ENCODE measurements at regions of chr1 and their contacts with region 1.

Region 1: GRCh38 chr1:214551436-214552173 is at the start of gene PTPN14:
- DNase-seq: peak; percentile 97
- H3K4me3 Mint-ChIP-seq: peak within 1 kb of the TSS; percentile 89
- H3K27ac Mint-ChIP-seq: peak within 1 kb of the TSS; percentile 90
- H3K4me1 Mint-ChIP-seq: peaks cover 39% of the 10 kb centered on the region
- H3K27me3 Mint-ChIP-seq: no peaks in the 10 kb centered on the region
- CTCF ChIP-seq: peak; percentile 77
- total RNA-seq, gene PTPN14: 240 and 243 TPM in 2 replicates

Region 2: GRCh38 chr1:214404154-214404553 is 147.5 kb before region 1 on chr1:
- CTCF ChIA-PET with region 1: interaction called, 17 read pairs
- POLR2A ChIA-PET with region 1: interaction called, 20 read pairs
- intact Hi-C with region 1: no loop called
- DNase-seq: peak; percentile 40
- H3K4me3 Mint-ChIP-seq: no peak overlapping the region
- H3K27ac Mint-ChIP-seq: peak overlapping the region; percentile 20
- H3K4me1 Mint-ChIP-seq: peaks cover 24% of the 10 kb centered on the region
- H3K27me3 Mint-ChIP-seq: no peaks in the 10 kb centered on the region
- CTCF ChIP-seq: no peak

Region 3: GRCh38 chr1:214427871-214428277 is 123.7 kb before region 1 on chr1:
- CTCF ChIA-PET with region 1: interaction called, 7 read pairs
- POLR2A ChIA-PET with region 1: interaction called, 61 read pairs
- intact Hi-C with region 1: no loop called
- DNase-seq: peak; percentile 97
- H3K4me3 Mint-ChIP-seq: peak overlapping the region; percentile 15
- H3K27ac Mint-ChIP-seq: peak overlapping the region; percentile 82
- H3K4me1 Mint-ChIP-seq: peaks cover 63% of the 10 kb centered on the region
- H3K27me3 Mint-ChIP-seq: no peaks in the 10 kb centered on the region
- CTCF ChIP-seq: no peak

Region 4: DNA sequence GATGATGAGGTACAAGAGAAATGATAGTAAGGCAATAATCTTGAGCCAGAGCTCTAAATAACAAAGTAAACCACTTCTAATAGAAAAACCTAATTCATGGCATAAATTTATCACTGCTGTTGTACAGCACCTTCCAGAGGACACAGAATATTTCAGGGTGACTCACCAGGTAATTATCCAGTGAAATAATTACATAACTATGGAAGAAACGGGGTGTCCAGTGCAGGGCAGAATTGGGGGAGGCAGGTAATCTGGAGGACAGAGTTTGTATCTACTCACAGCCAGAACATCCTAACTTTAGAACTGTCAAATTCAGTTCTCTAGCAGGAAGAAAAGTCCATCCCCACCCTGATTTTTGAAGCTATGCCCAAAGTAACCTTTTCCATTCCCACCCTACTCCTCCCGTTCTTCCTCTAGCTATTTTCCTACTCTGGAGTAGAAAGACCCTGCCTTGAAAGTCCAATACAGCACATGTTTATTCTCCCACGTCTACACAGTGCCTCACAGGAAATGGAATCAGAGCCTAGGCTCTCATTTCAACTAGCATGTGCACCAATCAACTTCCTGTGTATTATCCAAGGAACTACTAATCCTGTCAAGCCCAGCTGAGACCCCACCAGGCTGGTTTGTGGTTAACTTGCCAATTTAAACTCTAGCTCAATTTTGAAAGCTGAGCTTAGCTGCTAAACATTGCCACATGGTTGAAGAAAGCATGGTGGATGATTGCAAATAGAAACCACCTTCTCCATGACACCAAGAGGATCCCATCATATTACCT is 96.8 kb before region 1 on chr1:
- CTCF ChIA-PET with region 1: interaction called, 41 read pairs
- POLR2A ChIA-PET with region 1: interaction called, 881 read pairs
- intact Hi-C with region 1: no loop called
- DNase-seq: peak; percentile 60
- H3K4me3 Mint-ChIP-seq: no peak overlapping the region
- H3K27ac Mint-ChIP-seq: peak overlapping the region; percentile 42
- H3K4me1 Mint-ChIP-seq: peaks cover 66% of the 10 kb centered on the region
- H3K27me3 Mint-ChIP-seq: no peaks in the 10 kb centered on the region
- CTCF ChIP-seq: no peak

Region 5: DNA sequence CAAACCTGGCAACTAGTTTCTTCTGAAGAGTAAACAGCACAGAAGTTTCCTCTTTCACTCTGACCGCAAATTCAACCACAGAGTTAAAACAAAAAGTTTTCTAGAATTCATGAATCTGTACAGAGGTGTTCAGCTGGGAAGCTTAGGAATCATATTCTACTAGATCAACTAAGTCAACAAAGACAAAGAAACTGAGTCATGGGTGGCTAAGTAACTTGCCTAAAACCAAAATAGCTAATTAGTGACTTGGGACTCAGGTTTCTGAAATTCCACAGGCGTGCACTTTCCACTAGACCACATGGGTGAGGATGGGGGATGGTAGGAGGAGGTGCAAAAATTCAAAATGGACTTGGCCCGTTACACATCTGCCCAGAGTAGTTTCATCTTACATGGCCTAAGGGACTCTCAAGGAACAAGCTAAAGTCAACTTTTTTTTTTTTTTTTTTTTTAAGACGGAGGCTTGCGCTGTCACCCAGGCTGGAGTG is 26.0 kb before region 1 on chr1:
- CTCF ChIA-PET with region 1: interaction called, 7 read pairs
- POLR2A ChIA-PET with region 1: interaction called, 82 read pairs
- intact Hi-C with region 1: no loop called
- DNase-seq: peak; percentile 75
- H3K4me3 Mint-ChIP-seq: peak overlapping the region; percentile 4
- H3K27ac Mint-ChIP-seq: peak overlapping the region; percentile 63
- H3K4me1 Mint-ChIP-seq: peaks cover 48% of the 10 kb centered on the region
- H3K27me3 Mint-ChIP-seq: no peaks in the 10 kb centered on the region
- CTCF ChIP-seq: no peak

Region 6: DNA sequence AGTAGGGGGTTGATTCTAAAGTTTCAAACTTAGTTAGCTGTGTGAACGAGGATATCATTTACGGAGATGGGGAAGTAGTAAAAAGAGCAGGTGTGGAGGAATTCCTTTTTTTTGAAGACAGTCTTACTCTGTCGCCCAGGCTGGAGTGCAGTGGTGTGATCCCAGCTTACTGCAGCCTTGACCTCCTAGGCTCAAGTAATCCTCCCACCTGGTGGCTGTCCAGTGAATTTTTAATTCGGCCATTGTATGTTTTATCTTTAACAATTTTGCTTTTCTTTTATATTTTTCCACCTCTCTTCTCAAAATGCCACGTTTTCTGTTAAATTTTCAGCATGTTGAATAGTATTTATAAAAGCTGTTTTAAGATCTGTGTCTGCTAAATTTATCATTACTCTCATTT is 39.1 kb after region 1 on chr1:
- CTCF ChIA-PET with region 1: interaction called, 298 read pairs
- POLR2A ChIA-PET with region 1: interaction called, 2,189 read pairs
- intact Hi-C with region 1: loop called (anchors 1 kb)
- DNase-seq: no peak
- H3K4me3 Mint-ChIP-seq: no peak overlapping the region
- H3K27ac Mint-ChIP-seq: no peak overlapping the region
- H3K4me1 Mint-ChIP-seq: no peaks in the 10 kb centered on the region
- H3K27me3 Mint-ChIP-seq: no peaks in the 10 kb centered on the region
- CTCF ChIP-seq: peak; percentile 33

Region 7: GRCh38 chr1:215566556-215567490 is 1015.2 kb after region 1 on chr1 and contains the start of gene KCTD3:
- CTCF ChIA-PET with region 1: no interaction called
- POLR2A ChIA-PET with region 1: interaction called, 17 read pairs
- intact Hi-C with region 1: no loop called
- DNase-seq: peak; percentile 90
- H3K4me3 Mint-ChIP-seq: peak within 1 kb of the TSS; percentile 98
- H3K27ac Mint-ChIP-seq: peak within 1 kb of the TSS; percentile 99
- H3K4me1 Mint-ChIP-seq: peaks cover 28% of the 10 kb centered on the region
- H3K27me3 Mint-ChIP-seq: no peaks in the 10 kb centered on the region
- CTCF ChIP-seq: no peak
- total RNA-seq, gene KCTD3: 78.9 and 90.3 TPM in 2 replicates

Measured in MCF 10A (cell line).